GM12878 (cell line): ENCODE measurements at regions of chr7 and their contacts with region 1.

Region 1: DNA sequence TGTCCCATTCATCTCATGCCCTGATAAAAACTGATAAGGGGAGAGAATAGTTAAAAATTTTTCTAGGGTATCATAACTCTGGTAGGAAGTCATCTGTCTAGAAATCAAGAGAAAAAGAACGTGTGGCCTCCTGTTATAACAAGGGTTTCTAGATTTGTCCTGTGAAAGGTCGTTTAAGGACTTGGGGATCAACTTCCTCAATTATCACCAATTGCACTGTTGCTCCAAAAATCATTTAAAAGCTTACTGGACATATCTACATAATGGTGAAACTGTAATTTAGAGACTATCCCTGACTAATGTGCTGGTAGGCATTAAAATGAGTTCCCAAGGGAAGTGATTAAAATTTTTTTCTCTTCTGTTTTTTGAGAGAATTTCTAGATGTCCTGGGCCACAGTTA is 58.2 kb downstream of the GPR141 start:
- DNase-seq: no peak
- ATAC-seq: no peak
- H3K4me3 ChIP-seq: no peak overlapping the region
- H3K27ac ChIP-seq: no peak overlapping the region
- H3K4me1 ChIP-seq: no peaks in the 10 kb centered on the region
- H3K27me3 ChIP-seq: no peaks in the 10 kb centered on the region
- CTCF ChIP-seq: no peak
- EP300 ChIP-seq: no peak
- POLR2A ChIP-seq: no peak
- RAD21 ChIP-seq: no peak

Region 2: DNA sequence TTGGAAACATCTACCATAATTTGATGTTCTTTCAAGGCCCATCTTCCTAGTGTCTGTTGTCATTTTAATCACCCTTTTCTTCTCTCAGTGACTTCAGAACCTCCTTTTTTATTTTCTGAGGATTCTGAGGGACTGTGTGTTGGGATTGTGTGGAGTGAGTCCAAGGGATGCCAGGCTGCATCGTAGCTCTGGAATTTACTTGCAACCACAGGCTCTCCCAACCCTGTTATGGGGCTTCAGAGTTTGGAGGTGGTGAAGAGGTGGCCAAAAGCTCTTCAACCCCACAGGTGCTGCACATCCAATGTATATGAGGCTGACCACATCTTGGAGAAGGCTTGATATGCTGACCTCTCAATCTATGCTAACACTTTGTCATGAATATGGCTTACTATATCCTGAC is 137.7 kb before region 1 on chr7:
- CTCF ChIA-PET with region 1: no interaction called
- POLR2A ChIA-PET with region 1: no interaction called
- RAD21 ChIA-PET with region 1: no interaction called
- SMC1A ChIA-PET with region 1: no interaction called
- in situ Hi-C with region 1: no loop called
- intact Hi-C with region 1: no loop called
- DNase-seq: no peak
- ATAC-seq: no peak
- H3K4me3 ChIP-seq: no peak overlapping the region
- H3K27ac ChIP-seq: no peak overlapping the region
- H3K4me1 ChIP-seq: no peaks in the 10 kb centered on the region
- H3K27me3 ChIP-seq: no peaks in the 10 kb centered on the region; a peak in 1 of 4 replicates
- CTCF ChIP-seq: no peak
- EP300 ChIP-seq: no peak
- POLR2A ChIP-seq: no peak
- RAD21 ChIP-seq: no peak

Region 3: GRCh38 chr7:37759526-37759925 is 17.8 kb after region 1 on chr7:
- CTCF ChIA-PET with region 1: interaction called, 5 read pairs
- POLR2A ChIA-PET with region 1: interaction called, 3 read pairs
- RAD21 ChIA-PET with region 1: interaction called, 3 read pairs
- SMC1A ChIA-PET with region 1: interaction called, 10 read pairs
- in situ Hi-C with region 1: no loop called
- intact Hi-C with region 1: no loop called
- DNase-seq: no peak
- ATAC-seq: no peak
- H3K4me3 ChIP-seq: no peak overlapping the region
- H3K27ac ChIP-seq: no peak overlapping the region
- H3K4me1 ChIP-seq: no peaks in the 10 kb centered on the region
- H3K27me3 ChIP-seq: no peaks in the 10 kb centered on the region
- CTCF ChIP-seq: no peak
- EP300 ChIP-seq: no peak
- POLR2A ChIP-seq: no peak
- RAD21 ChIP-seq: no peak

Region 4: GRCh38 chr7:38086857-38087256 is 345.1 kb after region 1 on chr7:
- CTCF ChIA-PET with region 1: no interaction called
- POLR2A ChIA-PET with region 1: no interaction called
- RAD21 ChIA-PET with region 1: no interaction called
- SMC1A ChIA-PET with region 1: no interaction called
- in situ Hi-C with region 1: no loop called
- intact Hi-C with region 1: no loop called
- DNase-seq: no peak
- ATAC-seq: no peak
- H3K4me3 ChIP-seq: no peak overlapping the region
- H3K27ac ChIP-seq: no peak overlapping the region
- H3K4me1 ChIP-seq: no peaks in the 10 kb centered on the region
- H3K27me3 ChIP-seq: no peaks in the 10 kb centered on the region
- CTCF ChIP-seq: no peak
- EP300 ChIP-seq: no peak
- POLR2A ChIP-seq: no peak
- RAD21 ChIP-seq: no peak